ENCODE measurements at regions of chr19 and their contacts with region 1.

Region 1: DNA sequence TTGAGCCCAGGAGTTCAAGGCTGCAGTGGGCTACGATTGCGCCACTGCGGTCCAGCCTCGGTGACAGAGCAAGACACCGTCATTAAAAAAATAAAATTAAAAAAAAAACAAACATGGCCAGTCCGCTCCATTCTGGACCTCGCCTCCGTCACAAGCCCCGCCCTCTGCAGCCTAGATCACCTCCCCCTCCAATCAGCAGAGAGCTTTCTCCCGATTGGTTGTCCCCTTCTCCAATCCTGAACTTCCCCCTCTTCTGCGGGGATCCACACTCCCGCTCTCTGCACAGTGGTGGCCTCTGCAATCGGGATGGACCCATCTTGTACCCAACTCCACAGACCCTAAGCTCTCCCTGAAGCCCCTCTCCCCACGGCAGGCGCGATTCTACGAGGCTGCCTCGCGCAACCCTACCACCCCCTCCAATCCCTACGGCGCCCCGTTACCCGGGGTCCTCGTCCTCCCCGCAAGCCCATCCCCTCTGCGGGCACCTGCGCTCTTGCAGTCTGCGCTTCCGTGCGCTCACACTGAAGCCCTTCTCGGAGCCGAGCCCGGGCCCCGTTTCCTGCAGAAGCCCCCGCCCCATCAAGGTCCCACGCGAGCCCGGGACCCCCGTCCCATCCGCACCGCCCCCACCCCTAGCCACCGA is 540 bp downstream of the TMEM160 start:
- DNase-seq: peak; percentile 78
- ATAC-seq: peak; percentile 19
- H3K4me3 ChIP-seq: peak overlapping the region; percentile 55 to 94 (median 84)
- H3K4me3 Mint-ChIP-seq: peak overlapping the region; percentile 96
- H3K27ac ChIP-seq: peak overlapping the region; percentile 8 to 74
- H3K27ac Mint-ChIP-seq: peak overlapping the region; percentile 90
- H3K4me1 ChIP-seq: peaks cover 6 to 17% of the 10 kb centered on the region in 2 donors
- H3K4me1 Mint-ChIP-seq: peaks cover 11% of the 10 kb centered on the region
- H3K27me3 ChIP-seq: no peaks in the 10 kb centered on the region
- H3K27me3 Mint-ChIP-seq: no peaks in the 10 kb centered on the region
- CTCF ChIP-seq: no peak

Region 2: GRCh38 chr19:46600384-46601317 is 447.2 kb before region 1 on chr19:
- CTCF ChIA-PET with region 1: no interaction called
- POLR2A ChIA-PET with region 1: no interaction called
- intact Hi-C with region 1: loop called (anchors 5 kb)
- DNase-seq: peak; percentile 100
- ATAC-seq: peak; percentile 89
- H3K4me3 ChIP-seq: peak overlapping the region; percentile 64 to 100 (median 99)
- H3K4me3 Mint-ChIP-seq: peak overlapping the region; percentile 100
- H3K27ac ChIP-seq: peak overlapping the region; percentile 98 to 100
- H3K27ac Mint-ChIP-seq: peak overlapping the region; percentile 100
- H3K4me1 ChIP-seq: peaks cover 19 to 30% of the 10 kb centered on the region in 2 donors
- H3K4me1 Mint-ChIP-seq: peaks cover 31% of the 10 kb centered on the region
- H3K27me3 ChIP-seq: no peaks in the 10 kb centered on the region
- H3K27me3 Mint-ChIP-seq: no peaks in the 10 kb centered on the region
- CTCF ChIP-seq: no peak

Region 3: DNA sequence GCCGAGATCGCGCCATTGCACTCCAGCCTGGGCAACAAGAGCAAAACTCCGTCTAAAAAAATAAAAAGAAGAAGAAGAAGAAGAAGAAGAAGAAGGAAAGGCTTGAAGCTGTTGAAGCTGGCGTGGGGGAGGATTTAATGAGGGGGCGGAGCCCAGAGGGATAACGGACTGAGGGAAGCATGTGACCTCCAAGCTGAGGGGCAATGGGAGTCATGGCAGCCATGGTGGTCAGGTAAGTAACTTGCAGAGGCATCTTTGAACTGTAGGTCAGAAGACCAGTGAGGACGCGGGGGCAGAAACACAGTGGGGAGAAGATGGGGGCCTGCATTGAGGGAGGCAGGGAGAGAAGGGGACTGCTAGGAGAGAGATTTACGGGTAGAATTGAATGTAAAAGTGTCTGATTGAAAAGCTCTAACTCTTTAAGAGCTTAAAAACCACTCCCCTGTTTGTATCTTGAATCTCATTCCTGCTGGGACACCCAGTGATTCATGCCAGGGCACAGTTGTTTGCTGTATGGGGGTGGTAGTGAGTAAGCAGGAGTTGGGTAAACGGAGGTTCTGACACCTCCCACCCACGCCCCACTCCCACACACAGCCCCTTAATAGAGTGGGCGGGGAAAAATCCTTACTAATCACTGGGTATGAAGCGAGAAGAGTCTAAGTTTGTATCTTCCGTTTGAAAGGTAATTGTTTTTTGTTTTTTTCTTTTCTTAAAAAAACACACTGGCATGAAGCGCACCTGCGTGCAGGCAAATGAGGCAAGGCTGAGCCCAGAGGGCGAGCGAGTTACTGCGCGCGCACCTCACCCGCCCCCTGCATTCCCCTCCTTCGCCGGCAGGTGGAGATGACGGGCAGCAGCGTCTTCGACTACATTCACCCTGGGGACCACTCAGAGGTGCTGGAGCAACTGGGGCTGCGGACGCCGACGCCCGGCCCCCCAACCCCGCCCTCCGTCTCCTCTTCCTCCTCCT is 12.5 kb before region 1 on chr19:
- CTCF ChIA-PET with region 1: interaction called, 13 read pairs
- POLR2A ChIA-PET with region 1: interaction called, 5 read pairs
- intact Hi-C with region 1: loop called (anchors 1 kb)
- DNase-seq: peak; percentile 97
- ATAC-seq: peak; percentile 98
- H3K4me3 ChIP-seq: peak overlapping the region; percentile 36 to 69 (median 56)
- H3K4me3 Mint-ChIP-seq: peak overlapping the region; percentile 93
- H3K27ac ChIP-seq: no peak overlapping the region
- H3K27ac Mint-ChIP-seq: peak overlapping the region; percentile 80
- H3K4me1 ChIP-seq: peaks cover 18 to 19% of the 10 kb centered on the region in 2 donors
- H3K4me1 Mint-ChIP-seq: peaks cover 20% of the 10 kb centered on the region
- H3K27me3 ChIP-seq: peaks cover 0 to 20% (median 1%) of the 10 kb centered on the region in 4 experiments
- H3K27me3 Mint-ChIP-seq: peaks cover 13% of the 10 kb centered on the region
- CTCF ChIP-seq: peak; percentile 97

Region 4: DNA sequence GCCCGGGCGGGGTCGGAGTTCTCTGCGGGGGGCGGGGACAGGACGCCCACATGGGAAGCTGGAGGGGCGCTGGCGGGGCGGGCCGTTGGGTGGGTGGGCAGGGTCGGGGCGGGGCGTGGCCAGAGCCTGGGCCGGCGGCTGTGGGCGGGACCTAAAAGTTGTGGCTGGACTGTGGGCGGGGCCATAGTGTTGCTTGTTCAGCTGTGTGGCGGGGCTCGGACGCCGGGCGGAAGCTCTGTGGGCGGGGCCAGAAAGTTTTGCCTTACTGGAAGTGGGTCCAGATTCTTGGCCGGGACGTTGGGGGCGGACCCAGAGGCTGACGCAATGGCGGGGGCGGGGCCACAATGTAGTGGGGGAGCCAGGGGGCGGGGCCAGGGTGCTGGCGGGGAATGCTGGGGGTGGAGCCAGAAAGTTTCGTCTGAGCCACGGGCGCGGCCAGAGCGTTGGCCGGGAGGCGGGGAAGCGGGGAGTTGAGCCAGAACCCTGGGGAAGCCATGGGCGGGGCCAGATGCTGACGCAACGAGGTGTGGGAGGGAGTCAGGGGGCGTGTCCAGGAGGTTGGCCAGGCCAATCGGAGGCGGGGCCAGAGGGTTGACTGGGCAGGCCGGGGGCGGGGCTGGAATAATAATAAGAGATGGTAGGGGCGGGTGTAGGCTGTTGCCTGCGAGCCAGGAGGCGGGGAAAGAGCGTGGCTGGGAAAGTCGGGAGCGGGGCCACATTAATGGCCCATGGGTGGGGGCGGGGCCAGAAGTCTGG is 209.0 kb after region 1 on chr19:
- CTCF ChIA-PET with region 1: no interaction called
- POLR2A ChIA-PET with region 1: no interaction called
- intact Hi-C with region 1: loop called (anchors 1 kb)
- DNase-seq: peak; percentile 98
- ATAC-seq: peak; percentile 77
- H3K4me3 ChIP-seq: peak overlapping the region; percentile 38 to 71 (median 62)
- H3K4me3 Mint-ChIP-seq: peak overlapping the region; percentile 92
- H3K27ac ChIP-seq: peak overlapping the region; percentile 73 to 94
- H3K27ac Mint-ChIP-seq: peak overlapping the region; percentile 95
- H3K4me1 ChIP-seq: peaks cover 14 to 20% of the 10 kb centered on the region in 2 donors
- H3K4me1 Mint-ChIP-seq: peaks cover 40% of the 10 kb centered on the region
- H3K27me3 ChIP-seq: no peaks in the 10 kb centered on the region
- H3K27me3 Mint-ChIP-seq: no peaks in the 10 kb centered on the region
- CTCF ChIP-seq: no peak

Measured in B cell (primary cell).